ENCODE measurements at regions of chr17 and their contacts with region 1.

Region 1: DNA sequence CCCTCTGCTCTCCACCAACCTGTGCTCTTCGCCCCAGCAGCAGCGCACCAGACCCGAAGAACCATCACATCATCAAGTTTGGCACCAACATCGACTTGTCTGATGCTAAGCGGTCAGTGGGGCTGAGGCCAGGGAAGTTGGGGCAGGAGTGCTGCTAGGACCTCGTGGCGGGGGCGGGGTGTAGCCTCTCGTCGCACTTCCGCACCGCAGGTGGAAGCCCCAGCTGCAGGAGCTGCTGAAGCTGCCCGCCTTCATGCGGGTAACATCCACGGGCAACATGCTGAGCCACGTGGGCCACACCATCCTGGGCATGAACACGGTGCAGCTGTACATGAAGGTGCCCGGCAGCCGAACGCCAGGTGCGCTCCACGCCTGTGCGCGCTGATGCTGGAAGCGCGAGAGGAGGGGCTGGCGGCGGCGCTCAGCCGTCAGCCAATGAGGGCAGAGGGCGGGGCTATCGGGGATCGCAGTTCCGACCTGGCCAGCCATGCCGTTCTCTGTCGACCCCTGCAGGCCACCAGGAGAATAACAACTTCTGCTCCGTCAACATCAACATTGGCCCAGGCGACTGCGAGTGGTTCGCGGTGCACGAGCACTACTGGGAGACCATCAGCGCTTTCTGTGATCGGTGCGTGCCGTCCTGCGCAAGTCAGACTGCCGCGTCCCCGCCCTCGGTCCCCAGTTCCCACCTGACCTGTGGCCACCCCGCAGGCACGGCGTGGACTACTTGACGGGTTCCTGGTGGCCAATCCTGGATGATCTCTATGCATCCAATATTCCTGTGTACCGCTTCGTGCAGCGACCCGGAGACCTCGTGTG is 3.2 kb upstream of the TMEM88 start:
- DNase-seq: peak; percentile 92 to 95 (median 93)
- ATAC-seq: peak; percentile 57 to 78 (median 72)
- H3K4me3 ChIP-seq: peak overlapping the region in 4 of 12 donors; percentile 16 to 42 (median 22)
- H3K27ac ChIP-seq: peak overlapping the region in 8 of 12 donors; percentile 18 to 91 (median 37)
- H3K4me1 ChIP-seq: peaks cover 0 to 40% (median 24%) of the 10 kb centered on the region in 12 donors
- H3K27me3 ChIP-seq: no peaks in the 10 kb centered on the region
- CTCF ChIP-seq: peak; percentile 97 to 99 (median 99)
- POLR2A ChIP-seq: peak in 1 of 2 donors; percentile 21

Region 2: DNA sequence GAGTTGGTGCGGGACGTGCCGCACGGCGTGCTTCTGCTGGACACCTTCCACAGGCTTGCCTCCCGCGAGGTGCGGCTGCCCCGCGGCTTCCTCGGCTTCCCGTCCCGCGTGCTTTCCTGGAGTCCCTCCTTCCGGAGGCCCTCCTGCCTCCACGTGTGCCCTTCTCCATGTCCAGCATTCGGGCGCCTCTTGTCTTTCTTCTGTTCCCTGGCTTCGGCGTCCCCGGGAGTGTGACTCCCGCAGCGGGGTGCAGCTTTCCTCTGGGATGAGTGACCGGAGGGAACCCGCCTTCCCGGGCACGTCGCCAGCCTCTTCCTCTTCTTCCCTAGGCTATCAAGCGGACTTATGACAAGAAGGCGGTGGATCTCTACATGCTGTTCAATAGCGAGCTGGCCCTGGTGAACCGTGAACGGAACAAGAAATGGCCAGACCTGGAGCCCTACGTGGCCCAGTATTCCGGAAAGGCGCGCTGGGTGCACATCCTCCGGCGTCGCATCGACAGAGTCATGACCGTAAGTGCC is 111.1 kb before region 1 on chr17:
- intact Hi-C with region 1: loop called in 8 of 10 experiments (anchors 2 to 10 kb)
- DNase-seq: no peak
- ATAC-seq: peak in 1 of 4 donors; percentile 30
- H3K4me3 ChIP-seq: peak overlapping the region in 8 of 12 donors; percentile 12 to 35 (median 24)
- H3K27ac ChIP-seq: no peak overlapping the region
- H3K4me1 ChIP-seq: peaks cover 0 to 13% (median 0%) of the 10 kb centered on the region in 12 donors
- H3K27me3 ChIP-seq: peaks cover 0 to 13% (median 4%) of the 10 kb centered on the region in 9 donors
- CTCF ChIP-seq: no peak
- POLR2A ChIP-seq: no peak

Region 3: DNA sequence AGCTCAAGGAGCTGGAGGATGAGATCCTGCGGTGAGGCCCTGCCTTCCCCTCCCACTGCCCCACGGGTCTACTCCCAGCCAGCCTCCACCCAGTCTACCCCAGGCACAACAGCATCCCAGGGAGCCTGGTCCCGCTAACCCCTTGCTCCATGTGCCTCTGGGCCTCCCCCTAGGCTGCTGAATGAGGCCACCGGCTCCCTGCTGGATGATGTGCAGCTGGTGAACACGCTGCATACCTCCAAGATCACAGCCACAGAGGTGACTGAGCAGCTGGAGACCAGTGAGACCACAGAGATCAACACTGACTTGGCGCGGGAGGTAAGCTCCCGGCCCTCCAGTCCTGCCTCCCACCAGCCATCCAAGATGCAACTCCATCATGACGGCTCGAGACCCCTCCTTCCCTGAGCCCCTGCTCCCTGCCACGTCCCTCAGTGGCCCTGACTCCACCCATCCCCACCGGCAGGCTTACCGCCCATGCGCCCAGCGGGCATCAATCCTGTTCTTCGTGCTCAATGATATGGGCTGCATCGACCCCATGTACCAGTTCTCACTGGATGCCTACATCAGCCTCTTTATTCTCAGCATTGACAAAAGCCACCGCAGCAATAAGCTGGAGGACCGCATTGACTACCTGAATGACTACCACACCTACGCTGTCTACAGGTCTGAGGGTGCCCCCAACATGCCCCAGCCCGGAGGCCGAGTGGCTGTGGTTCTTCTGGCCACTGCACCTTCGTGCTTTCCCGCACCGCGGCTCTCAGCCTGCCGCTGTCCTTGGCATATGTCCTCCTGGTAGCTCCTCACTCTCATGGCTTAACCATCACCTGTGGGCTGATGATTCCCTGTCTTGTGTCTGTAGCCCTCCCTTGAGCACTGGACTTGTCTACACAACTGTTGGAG is 32.7 kb before region 1 on chr17:
- intact Hi-C with region 1: loop called in 8 of 10 experiments (anchors 1 to 5 kb)
- DNase-seq: no peak
- ATAC-seq: peak in 1 of 4 donors; percentile 8
- H3K4me3 ChIP-seq: no peak overlapping the region
- H3K27ac ChIP-seq: no peak overlapping the region
- H3K4me1 ChIP-seq: no peaks in the 10 kb centered on the region
- H3K27me3 ChIP-seq: no peaks in the 10 kb centered on the region
- CTCF ChIP-seq: no peak
- POLR2A ChIP-seq: no peak

Region 4: DNA sequence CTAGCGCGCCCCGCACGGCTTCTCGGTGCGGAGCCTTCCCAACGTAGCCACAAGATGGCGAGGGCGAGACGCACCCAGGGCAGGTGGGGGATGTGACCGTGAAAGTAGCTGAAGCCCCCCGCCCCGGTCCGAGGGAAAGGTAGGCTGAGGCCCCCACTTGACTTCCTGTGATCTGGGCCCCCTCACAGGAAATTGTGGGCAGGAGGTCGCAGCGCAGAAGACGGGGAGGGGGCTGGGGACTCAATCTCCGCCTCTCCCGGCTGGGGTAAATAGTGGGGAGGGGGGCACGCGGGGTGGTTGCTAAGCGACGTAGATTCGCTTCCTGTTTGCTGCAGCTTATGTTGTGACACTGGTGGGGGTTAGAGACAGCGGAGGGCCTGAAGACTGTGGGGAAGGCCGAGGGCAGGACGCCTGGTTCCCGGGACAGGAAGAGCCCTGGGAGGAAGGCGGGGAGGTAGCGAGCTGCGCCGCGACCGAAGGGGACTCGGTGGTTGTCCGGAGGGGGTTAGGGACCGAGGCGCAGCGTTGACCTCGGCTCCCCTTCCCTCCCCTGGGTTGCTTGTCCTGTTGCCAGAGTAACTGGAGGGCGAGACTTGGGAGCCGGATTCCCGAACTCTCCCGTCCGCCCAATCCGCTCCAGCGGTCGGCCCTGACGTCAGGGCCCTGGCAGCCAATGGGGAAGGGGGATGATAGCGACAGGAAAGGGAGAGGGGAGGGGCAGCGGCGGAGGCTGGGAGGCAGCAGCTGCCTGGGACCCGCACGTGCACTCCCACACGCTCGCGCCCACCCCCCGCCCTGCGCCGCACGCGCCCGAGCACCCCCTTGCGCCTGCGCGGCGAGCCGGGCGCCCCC is 16.5 kb before region 1 on chr17:
- intact Hi-C with region 1: loop called in 7 of 10 experiments (anchors 1 to 2 kb)
- DNase-seq: peak; percentile 98 to 99 (median 99)
- ATAC-seq: peak; percentile 79 to 84 (median 82)
- H3K4me3 ChIP-seq: peak overlapping the region; percentile 59 to 99 (median 80)
- H3K27ac ChIP-seq: peak overlapping the region; percentile 86 to 100 (median 98)
- H3K4me1 ChIP-seq: peaks cover 0 to 56% (median 35%) of the 10 kb centered on the region in 12 donors
- H3K27me3 ChIP-seq: no peaks in the 10 kb centered on the region
- CTCF ChIP-seq: peak; percentile 56 to 94 (median 80)
- POLR2A ChIP-seq: peak; percentile 31 to 71